Panc1 (cell line): ENCODE measurements at regions of chr4 and their contacts with region 1.

Region 1: DNA sequence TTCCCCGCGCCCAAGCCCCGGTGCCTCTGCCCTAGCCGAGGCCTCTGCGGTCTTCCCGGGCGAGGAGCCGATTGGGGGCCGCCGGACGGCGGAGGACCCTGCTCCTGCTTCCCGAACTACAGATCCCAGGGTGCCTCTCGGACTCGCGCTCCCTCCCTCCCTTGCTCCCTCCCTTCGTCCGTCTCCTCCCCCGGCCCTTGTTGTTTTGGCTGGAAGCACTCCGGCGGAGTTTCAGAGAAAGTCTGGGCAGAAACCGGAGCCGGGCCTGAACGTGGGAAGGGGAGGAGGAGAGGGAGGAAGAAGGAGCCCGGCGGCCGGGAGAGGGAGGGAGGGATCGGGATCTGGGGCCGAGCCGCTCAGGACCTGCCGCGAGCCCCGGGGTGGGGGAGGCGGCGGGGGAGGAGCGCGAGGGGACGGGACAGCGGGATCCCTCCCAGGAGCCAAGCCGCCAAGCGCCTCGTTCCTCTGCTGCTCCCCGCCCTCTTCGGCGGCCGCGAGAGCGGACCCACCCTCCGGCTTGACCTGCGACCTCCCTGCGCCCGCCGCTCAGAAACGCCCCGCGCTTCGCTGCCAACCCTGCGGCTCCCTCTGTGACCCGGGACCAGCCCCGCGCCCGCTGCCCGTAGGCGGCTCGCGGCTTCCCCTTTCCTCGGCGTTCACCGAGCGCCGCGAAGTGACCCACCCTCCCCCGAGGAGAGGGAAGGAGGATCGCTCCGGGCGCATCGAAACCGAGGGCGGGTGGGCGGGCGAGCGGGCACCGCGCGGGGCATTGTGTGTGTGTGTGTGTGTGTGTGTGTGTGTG is 496 bp upstream of the GAB1 start:
- DNase-seq: no peak
- ATAC-seq: peak; percentile 92
- H3K4me3 ChIP-seq: peak overlapping the region; percentile 58 to 65
- H3K27ac ChIP-seq: no peak overlapping the region; the same call in 1 of the 2 replicates
- H3K4me1 ChIP-seq: no peaks in the 10 kb centered on the region
- H3K27me3 ChIP-seq: peaks cover 4% of the 10 kb centered on the region; the same call in 1 of the 2 replicates
- CTCF ChIP-seq: no peak

Region 2: GRCh38 chr4:143215873-143216272 is 120.3 kb before region 1 on chr4:
- CTCF ChIA-PET with region 1: no interaction called
- POLR2A ChIA-PET with region 1: no interaction called
- in situ Hi-C with region 1: no loop called
- intact Hi-C with region 1: loop called (anchors 10 kb)
- DNase-seq: no peak
- ATAC-seq: no peak
- H3K4me3 ChIP-seq: no peak overlapping the region
- H3K27ac ChIP-seq: no peak overlapping the region
- H3K4me1 ChIP-seq: no peaks in the 10 kb centered on the region
- H3K27me3 ChIP-seq: no peaks in the 10 kb centered on the region
- CTCF ChIP-seq: no peak

Region 3: GRCh38 chr4:143351774-143352451 is 15.7 kb after region 1 on chr4:
- CTCF ChIA-PET with region 1: interaction called, 3 read pairs
- POLR2A ChIA-PET with region 1: interaction called, 10 read pairs
- in situ Hi-C with region 1: no loop called
- intact Hi-C with region 1: no loop called
- DNase-seq: no peak
- ATAC-seq: no peak
- H3K4me3 ChIP-seq: no peak overlapping the region
- H3K27ac ChIP-seq: no peak overlapping the region
- H3K4me1 ChIP-seq: no peaks in the 10 kb centered on the region
- H3K27me3 ChIP-seq: no peaks in the 10 kb centered on the region
- CTCF ChIP-seq: no peak

Region 4: DNA sequence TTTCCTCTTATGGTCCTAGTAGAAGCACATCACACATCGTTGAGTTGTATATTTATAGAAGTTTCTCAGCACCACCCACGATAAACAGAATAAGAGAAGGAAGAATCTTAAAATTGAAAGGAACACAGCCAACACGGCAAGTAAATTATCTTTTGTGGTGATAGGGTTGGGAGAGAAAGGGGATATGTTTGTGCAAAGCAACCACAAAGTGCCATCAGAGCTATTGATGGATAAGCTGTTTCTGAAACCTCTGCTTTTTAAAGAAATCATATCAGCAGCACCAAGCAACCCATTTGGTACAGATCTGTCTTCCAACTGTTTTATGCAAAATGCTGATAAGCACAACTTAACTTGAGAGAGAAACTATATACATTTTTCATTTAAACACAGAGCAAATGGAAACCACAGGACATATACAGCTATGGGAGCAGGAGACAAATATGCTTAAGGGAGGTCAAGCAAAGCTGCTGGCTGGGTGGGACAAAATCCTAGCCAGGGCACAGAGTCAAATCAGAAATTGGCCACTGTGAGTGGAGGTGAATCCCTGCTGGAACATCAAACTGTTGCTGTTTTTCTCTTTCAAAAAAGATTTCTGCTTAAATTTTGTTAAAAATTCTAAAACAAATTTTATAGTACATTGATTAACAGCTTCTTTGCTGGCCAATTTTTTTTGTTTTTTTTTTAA is 1115.7 kb after region 1 on chr4:
- CTCF ChIA-PET with region 1: no interaction called
- POLR2A ChIA-PET with region 1: no interaction called
- in situ Hi-C with region 1: no loop called
- intact Hi-C with region 1: no loop called
- DNase-seq: no peak
- ATAC-seq: no peak
- H3K4me3 ChIP-seq: no peak overlapping the region
- H3K27ac ChIP-seq: no peak overlapping the region
- H3K4me1 ChIP-seq: no peaks in the 10 kb centered on the region
- H3K27me3 ChIP-seq: no peaks in the 10 kb centered on the region
- CTCF ChIP-seq: no peak